CD8-positive, alpha-beta T cell (primary cell): ENCODE measurements at regions of chr9 and their contacts with region 1.

Region 1: GRCh38 chr9:110048403-110048975 is 159.5 kb downstream of the C9orf152 start:
- DNase-seq: peak; percentile 47 to 84 (median 61)
- ATAC-seq: peak; percentile 93
- H3K4me3 ChIP-seq: peak overlapping the region; percentile 38 to 63
- H3K4me3 Mint-ChIP-seq: peak overlapping the region; percentile 88
- H3K27ac ChIP-seq: no peak overlapping the region
- H3K27ac Mint-ChIP-seq: no peak overlapping the region
- H3K4me1 ChIP-seq: peaks cover 15% of the 10 kb centered on the region
- H3K4me1 Mint-ChIP-seq: peaks cover 31% of the 10 kb centered on the region
- H3K27me3 ChIP-seq: peaks cover 0 to 7% of the 10 kb centered on the region in 2 experiments
- H3K27me3 Mint-ChIP-seq: peaks cover 24% of the 10 kb centered on the region
- CTCF ChIP-seq: no peak

Region 2: DNA sequence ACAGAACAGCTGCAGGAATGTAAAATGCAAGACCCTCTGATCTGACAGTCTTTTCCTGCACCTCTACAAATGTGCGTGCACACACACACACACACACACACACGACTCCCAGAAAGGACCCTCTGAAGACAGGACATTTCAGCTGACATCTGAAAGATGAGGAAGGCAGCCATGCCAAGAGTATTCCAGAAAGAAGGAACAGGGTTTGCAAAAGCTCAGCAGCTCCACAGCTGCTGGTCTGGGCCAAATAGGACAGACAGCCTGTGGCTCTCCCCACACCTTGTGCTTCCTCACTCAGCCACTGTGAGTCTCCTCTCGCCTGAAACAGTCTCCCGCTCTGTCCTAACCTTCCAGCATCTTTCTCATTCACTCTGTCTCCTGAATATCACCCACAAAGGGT is 79.5 kb before region 1 on chr9:
- CTCF ChIA-PET with region 1: no interaction called
- POLR2A ChIA-PET with region 1: no interaction called
- intact Hi-C with region 1: loop called in 1 of 2 experiments (anchors 5 kb)
- DNase-seq: no peak
- ATAC-seq: no peak
- H3K4me3 ChIP-seq: no peak overlapping the region
- H3K4me3 Mint-ChIP-seq: peak overlapping the region; percentile 6
- H3K27ac ChIP-seq: no peak overlapping the region
- H3K27ac Mint-ChIP-seq: peak overlapping the region; percentile 84
- H3K4me1 ChIP-seq: peaks cover 29% of the 10 kb centered on the region
- H3K4me1 Mint-ChIP-seq: peaks cover 37% of the 10 kb centered on the region
- H3K27me3 ChIP-seq: no peaks in the 10 kb centered on the region
- H3K27me3 Mint-ChIP-seq: no peaks in the 10 kb centered on the region
- CTCF ChIP-seq: no peak